Naive thymus-derived CD4-positive, alpha-beta T cell (primary cell): ENCODE measurements at regions of chr9 and their contacts with region 1.

Region 1: GRCh38 chr9:122912964-122913673 is at the start of gene ZBTB6:
- DNase-seq: peak; percentile 47 to 89 (median 77)
- ATAC-seq: peak; percentile 96
- H3K4me3 ChIP-seq: peak within 1 kb of the TSS; percentile 74
- H3K4me3 Mint-ChIP-seq: peak within 1 kb of the TSS; percentile 91 to 100 (median 98)
- H3K27ac ChIP-seq: peak within 1 kb of the TSS; percentile 92
- H3K27ac Mint-ChIP-seq: peak within 1 kb of the TSS; percentile 90 to 100 (median 99)
- H3K4me1 ChIP-seq: peaks cover 9 to 13% of the 10 kb centered on the region in 2 donors
- H3K4me1 Mint-ChIP-seq: peaks cover 12 to 46% (median 42%) of the 10 kb centered on the region in 7 donors
- H3K27me3 ChIP-seq: no peaks in the 10 kb centered on the region
- H3K27me3 Mint-ChIP-seq: no peaks in the 10 kb centered on the region
- total RNA-seq, gene ZBTB6: 3.7 to 17.8 (median 14.4) TPM

Region 2: DNA sequence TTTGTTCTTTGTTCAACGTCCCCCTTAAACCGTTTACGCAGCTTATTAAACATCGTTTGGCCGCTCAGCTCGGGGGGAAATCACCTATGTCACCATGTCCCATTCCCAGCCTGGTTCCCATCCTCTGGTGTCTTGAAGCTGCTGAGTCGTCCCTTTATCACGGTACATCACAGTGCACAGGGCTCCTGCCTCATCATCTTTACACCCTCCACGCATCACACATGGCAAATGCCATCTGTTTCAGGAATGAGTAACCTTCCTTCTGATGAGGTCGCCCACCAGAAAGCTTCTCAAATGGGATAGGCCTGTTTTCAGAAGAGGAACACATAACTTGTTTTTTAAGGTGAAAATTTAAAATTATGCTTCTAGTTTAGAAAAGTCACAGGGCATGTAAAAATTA is 676.4 kb before region 1 on chr9:
- CTCF ChIA-PET with region 1: no interaction called
- POLR2A ChIA-PET with region 1: no interaction called
- intact Hi-C with region 1: no loop called
- DNase-seq: no peak
- ATAC-seq: no peak
- H3K4me3 ChIP-seq: no peak overlapping the region
- H3K4me3 Mint-ChIP-seq: no peak overlapping the region
- H3K27ac ChIP-seq: no peak overlapping the region
- H3K27ac Mint-ChIP-seq: no peak overlapping the region
- H3K4me1 ChIP-seq: no peaks in the 10 kb centered on the region
- H3K4me1 Mint-ChIP-seq: no peaks in the 10 kb centered on the region
- H3K27me3 ChIP-seq: no peaks in the 10 kb centered on the region
- H3K27me3 Mint-ChIP-seq: peaks cover 0 to 9% (median 0%) of the 10 kb centered on the region in 5 donors

Region 3: GRCh38 chr9:122931226-122932121 is 18.4 kb after region 1 on chr9 and contains the start of gene ZBTB26:
- CTCF ChIA-PET with region 1: interaction called, 5 read pairs
- POLR2A ChIA-PET with region 1: interaction called, 25 read pairs
- intact Hi-C with region 1: loop called (anchors 1 kb)
- DNase-seq: peak; percentile 74 to 90 (median 80)
- ATAC-seq: peak; percentile 99
- H3K4me3 ChIP-seq: peak within 1 kb of the TSS; percentile 75
- H3K4me3 Mint-ChIP-seq: peak within 1 kb of the TSS in 1 of 10 donors; percentile 99
- H3K27ac ChIP-seq: peak within 1 kb of the TSS; percentile 94
- H3K27ac Mint-ChIP-seq: peak within 1 kb of the TSS in 5 of 9 donors; percentile 86 to 97 (median 97)
- H3K4me1 ChIP-seq: peaks cover 8 to 11% of the 10 kb centered on the region in 2 donors
- H3K4me1 Mint-ChIP-seq: peaks cover 20 to 39% (median 30%) of the 10 kb centered on the region in 7 donors
- H3K27me3 ChIP-seq: no peaks in the 10 kb centered on the region
- H3K27me3 Mint-ChIP-seq: no peaks in the 10 kb centered on the region
- total RNA-seq, gene ZBTB26: 4.6 to 11.0 (median 8.6) TPM

Region 4: DNA sequence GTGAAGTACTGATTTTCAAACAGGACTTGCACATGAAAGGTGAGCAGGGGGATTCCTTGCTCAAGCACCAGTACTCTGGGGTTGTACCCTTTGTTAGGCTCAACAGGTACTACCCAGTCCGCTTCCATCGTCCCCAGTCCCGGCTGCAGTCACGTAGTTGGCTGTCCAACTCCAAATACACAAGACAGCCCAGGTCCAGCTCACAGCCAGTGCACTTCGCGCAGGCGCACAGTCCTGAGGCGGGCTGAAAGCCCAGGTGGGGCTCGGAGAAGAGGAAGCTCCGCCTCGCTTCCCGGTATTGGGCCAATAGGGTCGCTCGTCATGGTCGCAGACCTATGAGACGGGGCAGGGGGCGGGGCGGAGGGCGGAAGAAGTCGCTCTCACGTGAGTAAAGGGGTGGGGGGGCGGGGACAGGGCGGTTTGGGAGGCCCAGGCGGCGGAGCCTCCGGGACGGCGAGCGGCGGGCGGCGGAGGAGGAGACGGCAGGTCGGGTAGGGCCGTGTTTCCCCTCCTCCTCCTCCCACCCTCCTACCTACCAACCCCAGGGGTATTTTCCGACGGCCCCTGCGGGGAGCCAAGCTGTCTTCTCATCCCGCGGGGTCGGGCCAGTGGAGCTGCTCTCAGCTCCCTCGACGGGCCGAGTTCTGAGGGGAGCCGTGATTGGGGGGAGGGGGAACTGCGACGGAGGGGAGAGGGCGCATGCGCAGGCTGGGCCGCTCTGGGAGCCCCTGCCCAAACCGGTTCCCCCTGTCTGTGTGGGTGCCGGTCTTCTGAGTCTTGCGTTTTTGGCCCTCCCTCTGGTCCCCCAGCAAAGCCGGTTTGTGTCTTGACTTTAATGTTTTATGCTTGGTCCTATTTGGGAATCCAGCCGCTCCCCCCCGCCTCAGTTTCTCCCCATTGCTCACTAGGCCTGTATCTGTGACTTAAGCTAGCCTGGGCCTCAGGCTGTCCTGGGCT is 27.8 kb after region 1 on chr9 and contains the start of gene RABGAP1:
- CTCF ChIA-PET with region 1: interaction called, 3 read pairs
- POLR2A ChIA-PET with region 1: interaction called, 24 read pairs
- intact Hi-C with region 1: loop called (anchors 1 kb)
- DNase-seq: peak; percentile 89 to 98 (median 94)
- ATAC-seq: peak; percentile 99
- H3K4me3 ChIP-seq: peak within 1 kb of the TSS; percentile 84
- H3K4me3 Mint-ChIP-seq: peak within 1 kb of the TSS; percentile 90 to 99 (median 96)
- H3K27ac ChIP-seq: peak within 1 kb of the TSS; percentile 89
- H3K27ac Mint-ChIP-seq: peak within 1 kb of the TSS; percentile 80 to 98 (median 94)
- H3K4me1 ChIP-seq: peaks cover 10 to 12% of the 10 kb centered on the region in 2 donors
- H3K4me1 Mint-ChIP-seq: peaks cover 18 to 47% (median 39%) of the 10 kb centered on the region in 7 donors
- H3K27me3 ChIP-seq: no peaks in the 10 kb centered on the region
- H3K27me3 Mint-ChIP-seq: no peaks in the 10 kb centered on the region
- total RNA-seq, gene RABGAP1: 33.8 to 45.7 (median 45.0) TPM

Region 5: DNA sequence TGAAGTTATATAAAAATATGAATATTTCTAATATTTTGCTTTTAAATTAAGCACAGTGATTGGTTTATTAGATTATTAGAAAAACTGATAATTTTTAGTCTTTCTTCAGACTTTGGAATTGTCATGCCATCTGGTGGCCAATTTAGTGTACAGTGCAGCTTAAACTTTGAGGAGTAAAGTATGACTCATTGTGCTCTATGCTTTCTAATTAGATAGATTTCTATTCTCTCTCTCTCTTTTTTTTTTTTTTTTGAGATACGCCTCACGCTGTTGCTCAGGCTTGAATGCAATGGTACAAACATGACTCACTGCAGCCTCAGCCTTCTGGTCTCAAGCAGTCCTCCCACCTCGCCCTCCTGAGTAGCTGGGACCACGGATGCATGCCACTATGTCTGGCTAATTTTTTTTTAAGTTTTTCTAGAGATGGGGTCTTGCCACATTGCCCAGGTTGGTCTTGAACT is 78.3 kb after region 1 on chr9:
- CTCF ChIA-PET with region 1: interaction called, 3 read pairs
- POLR2A ChIA-PET with region 1: interaction called, 7 read pairs
- intact Hi-C with region 1: loop called (anchors 1 to 2 kb)
- DNase-seq: peak in 8 of 9 donors; percentile 1 to 37 (median 14)
- ATAC-seq: peak; percentile 81
- H3K4me3 ChIP-seq: no peak overlapping the region
- H3K4me3 Mint-ChIP-seq: no peak overlapping the region
- H3K27ac ChIP-seq: no peak overlapping the region
- H3K27ac Mint-ChIP-seq: no peak overlapping the region
- H3K4me1 ChIP-seq: no peaks in the 10 kb centered on the region
- H3K4me1 Mint-ChIP-seq: peaks cover 0 to 6% (median 4%) of the 10 kb centered on the region in 7 donors
- H3K27me3 ChIP-seq: no peaks in the 10 kb centered on the region
- H3K27me3 Mint-ChIP-seq: no peaks in the 10 kb centered on the region